HepG2 (cell line): ENCODE measurements at regions of chr18 and their contacts with region 1.

Region 1: DNA sequence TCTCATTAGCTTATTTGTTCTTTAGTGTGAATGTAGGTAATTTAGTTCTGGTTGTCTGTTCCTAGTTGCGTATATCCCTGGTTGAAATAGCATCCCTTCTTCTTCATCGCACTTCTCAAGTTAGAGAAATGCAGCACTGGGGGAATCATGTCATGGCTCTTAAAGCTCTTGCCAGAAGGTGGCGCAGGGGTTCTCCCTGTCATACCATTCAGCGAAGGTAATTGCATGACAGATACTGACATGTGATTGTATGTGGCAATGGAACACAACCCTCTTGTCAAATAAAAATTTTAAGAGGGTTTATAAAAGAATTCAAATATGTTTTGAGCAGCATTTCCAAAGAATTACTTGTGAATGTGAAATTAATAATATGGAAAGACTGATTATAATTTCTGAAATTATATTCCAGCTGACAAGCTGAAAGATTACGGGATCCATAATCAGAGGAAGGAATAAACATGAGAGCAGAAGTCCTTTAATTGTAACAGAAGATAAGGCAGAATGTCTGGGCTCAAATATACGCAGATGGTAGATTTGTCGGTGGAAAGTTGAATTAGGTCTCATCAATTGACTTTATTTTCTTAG is 411.7 kb downstream of the DSEL start:
- DNase-seq: peak; percentile 55
- ATAC-seq: peak; percentile 96
- H3K4me3 ChIP-seq: no peak overlapping the region
- H3K27ac ChIP-seq: no peak overlapping the region
- H3K4me1 ChIP-seq: no peaks in the 10 kb centered on the region
- H3K27me3 ChIP-seq: no peaks in the 10 kb centered on the region
- CTCF ChIP-seq: peak; percentile 80
- EP300 ChIP-seq: no peak
- POLR2A ChIP-seq: no peak
- RAD21 ChIP-seq: peak; percentile 59

Region 2: GRCh38 chr18:67145586-67146292 is 40.9 kb after region 1 on chr18:
- CTCF ChIA-PET with region 1: no interaction called
- POLR2A ChIA-PET with region 1: no interaction called
- in situ Hi-C with region 1: no loop called
- intact Hi-C with region 1: loop called (anchors 5 kb)
- DNase-seq: peak; percentile 61
- ATAC-seq: peak; percentile 100
- H3K4me3 ChIP-seq: no peak overlapping the region; a peak in 1 of 6 replicates
- H3K27ac ChIP-seq: no peak overlapping the region
- H3K4me1 ChIP-seq: peaks cover 13% of the 10 kb centered on the region
- H3K27me3 ChIP-seq: no peaks in the 10 kb centered on the region
- CTCF ChIP-seq: no peak
- EP300 ChIP-seq: no peak
- POLR2A ChIP-seq: no peak
- RAD21 ChIP-seq: no peak

Region 3: DNA sequence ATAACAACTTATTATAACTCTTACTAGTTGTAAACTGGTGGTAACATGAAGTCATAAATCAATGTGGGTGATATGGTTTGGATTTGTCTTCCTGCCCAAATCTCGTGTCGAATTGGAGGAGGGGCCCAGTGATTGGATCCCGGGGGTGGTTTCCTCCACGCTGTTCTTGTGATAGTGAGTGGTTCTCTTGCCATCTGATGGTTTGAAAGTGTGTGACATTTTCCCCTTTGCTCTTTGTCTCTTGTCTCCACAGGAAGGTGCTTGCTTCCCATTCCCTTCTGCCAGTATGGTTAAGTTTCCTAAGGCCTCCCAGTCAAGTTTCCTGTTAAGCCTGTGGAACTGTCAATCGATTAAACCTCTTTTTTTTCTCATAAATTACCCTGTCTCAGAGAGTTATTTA is 90.1 kb after region 1 on chr18:
- CTCF ChIA-PET with region 1: interaction called, 58 read pairs
- POLR2A ChIA-PET with region 1: no interaction called
- in situ Hi-C with region 1: loop called (anchors 5 kb)
- intact Hi-C with region 1: loop called (anchors 1 kb)
- DNase-seq: no peak
- ATAC-seq: no peak
- H3K4me3 ChIP-seq: no peak overlapping the region
- H3K27ac ChIP-seq: no peak overlapping the region
- H3K4me1 ChIP-seq: no peaks in the 10 kb centered on the region
- H3K27me3 ChIP-seq: no peaks in the 10 kb centered on the region
- CTCF ChIP-seq: no peak
- EP300 ChIP-seq: no peak
- POLR2A ChIP-seq: no peak
- RAD21 ChIP-seq: no peak

Region 4: DNA sequence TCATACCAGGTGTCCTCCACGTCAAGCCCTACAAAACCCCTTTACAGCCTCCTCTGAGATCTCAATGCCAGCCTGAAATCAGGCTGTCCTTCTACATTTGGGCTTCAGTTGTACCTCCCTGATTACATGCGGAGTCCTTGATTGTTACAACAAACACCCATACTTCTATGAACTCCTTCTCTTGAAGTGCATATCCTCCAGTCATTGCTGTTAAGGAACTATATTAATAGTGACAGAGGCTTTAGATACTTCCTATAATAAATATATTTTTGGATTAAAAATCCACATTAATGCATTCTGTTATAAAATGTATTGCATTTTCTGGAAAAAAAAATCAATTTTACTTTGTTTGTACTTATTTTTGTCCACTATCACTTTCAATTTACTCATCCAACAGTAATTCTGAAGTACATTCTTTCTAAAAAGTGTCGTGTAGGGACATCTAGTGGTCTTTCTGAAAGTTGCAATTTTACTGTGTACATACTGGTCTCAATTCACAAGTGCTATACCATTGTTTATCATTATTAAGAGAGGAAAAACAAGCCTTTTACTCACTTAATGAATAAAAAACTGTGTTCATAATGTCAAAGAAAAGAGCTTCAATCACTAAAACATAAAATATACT is 95.3 kb after region 1 on chr18:
- CTCF ChIA-PET with region 1: interaction called, 58 read pairs
- POLR2A ChIA-PET with region 1: no interaction called
- in situ Hi-C with region 1: no loop called
- intact Hi-C with region 1: loop called (anchors 1 kb)
- DNase-seq: peak; percentile 53
- ATAC-seq: peak; percentile 93
- H3K4me3 ChIP-seq: no peak overlapping the region
- H3K27ac ChIP-seq: no peak overlapping the region
- H3K4me1 ChIP-seq: no peaks in the 10 kb centered on the region
- H3K27me3 ChIP-seq: no peaks in the 10 kb centered on the region; a peak in 1 of 5 replicates
- CTCF ChIP-seq: peak; percentile 66
- EP300 ChIP-seq: no peak
- POLR2A ChIP-seq: no peak
- RAD21 ChIP-seq: 0 out of 2 replicates have a peak, but pooled peaks have one; percentile 16